ENCODE measurements at regions of chr15 and their contacts with region 1.

Region 1: GRCh38 chr15:51971375-51972133 is at the start of gene LEO1:
- DNase-seq: peak; percentile 95
- H3K4me3 Mint-ChIP-seq: peak within 1 kb of the TSS; percentile 97
- H3K27ac Mint-ChIP-seq: peak within 1 kb of the TSS; percentile 94
- H3K4me1 Mint-ChIP-seq: peaks cover 12% of the 10 kb centered on the region
- H3K27me3 Mint-ChIP-seq: no peaks in the 10 kb centered on the region
- CTCF ChIP-seq: peak; percentile 31
- total RNA-seq, gene LEO1: 24.2 and 29.3 TPM in 2 replicates

Region 2: GRCh38 chr15:51992976-51993375 is 21.4 kb after region 1 on chr15:
- CTCF ChIA-PET with region 1: no interaction called
- POLR2A ChIA-PET with region 1: interaction called, 36 read pairs
- intact Hi-C with region 1: no loop called
- DNase-seq: peak; percentile 71
- H3K4me3 Mint-ChIP-seq: no peak overlapping the region
- H3K27ac Mint-ChIP-seq: no peak overlapping the region
- H3K4me1 Mint-ChIP-seq: peaks cover 28% of the 10 kb centered on the region
- H3K27me3 Mint-ChIP-seq: no peaks in the 10 kb centered on the region
- CTCF ChIP-seq: no peak

Region 3: DNA sequence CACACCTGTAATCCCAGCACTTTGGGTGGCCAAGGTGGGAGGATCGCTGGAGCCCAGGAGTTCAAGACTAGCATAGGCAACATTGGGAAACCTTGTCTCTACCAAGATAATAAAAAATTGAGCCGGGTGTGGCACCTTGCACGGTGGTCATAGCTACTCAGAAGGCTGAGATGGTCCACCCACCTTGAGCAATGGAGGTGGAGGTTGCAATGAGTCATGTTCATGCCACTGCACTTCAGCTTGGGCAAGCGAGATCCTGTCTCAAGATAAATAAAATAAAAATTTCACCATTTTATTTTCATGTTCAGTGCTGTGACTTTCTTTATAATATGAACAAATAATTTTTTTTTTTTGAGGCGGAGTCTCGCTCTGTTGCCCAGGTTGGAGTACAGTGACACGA is 60.0 kb after region 1 on chr15:
- CTCF ChIA-PET with region 1: interaction called, 3 read pairs
- POLR2A ChIA-PET with region 1: interaction called, 17 read pairs
- intact Hi-C with region 1: no loop called
- DNase-seq: peak; percentile 95
- H3K4me3 Mint-ChIP-seq: no peak overlapping the region
- H3K27ac Mint-ChIP-seq: peak overlapping the region; percentile 31
- H3K4me1 Mint-ChIP-seq: peaks cover 16% of the 10 kb centered on the region
- H3K27me3 Mint-ChIP-seq: no peaks in the 10 kb centered on the region
- CTCF ChIP-seq: no peak

Region 4: DNA sequence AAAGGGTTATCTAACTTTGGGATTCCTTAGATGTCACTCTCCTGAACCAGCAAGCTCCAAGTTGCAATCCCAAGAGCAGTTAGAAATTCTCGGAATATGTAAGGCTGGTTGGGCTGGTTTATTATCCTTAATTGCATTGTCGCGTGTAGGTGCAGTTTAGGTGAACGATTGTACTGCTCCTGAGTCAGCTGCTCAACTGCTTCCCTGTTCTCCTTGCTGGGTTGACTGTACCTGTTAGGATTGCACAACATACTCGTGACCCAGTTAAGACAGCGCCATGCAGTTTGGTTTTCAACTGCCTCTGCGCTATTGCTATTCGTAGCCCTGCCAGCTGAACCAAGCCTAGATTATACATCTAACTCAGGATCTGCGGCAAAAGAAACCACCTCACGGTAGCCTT is 100.0 kb after region 1 on chr15:
- CTCF ChIA-PET with region 1: interaction called, 4 read pairs
- POLR2A ChIA-PET with region 1: interaction called, 62 read pairs
- intact Hi-C with region 1: no loop called
- DNase-seq: peak; percentile 87
- H3K4me3 Mint-ChIP-seq: peak overlapping the region; percentile 26
- H3K27ac Mint-ChIP-seq: peak overlapping the region; percentile 66
- H3K4me1 Mint-ChIP-seq: peaks cover 51% of the 10 kb centered on the region
- H3K27me3 Mint-ChIP-seq: no peaks in the 10 kb centered on the region
- CTCF ChIP-seq: no peak

Region 5: GRCh38 chr15:52179278-52180195 is 208.0 kb after region 1 on chr15:
- CTCF ChIA-PET with region 1: no interaction called
- POLR2A ChIA-PET with region 1: interaction called, 15 read pairs
- intact Hi-C with region 1: no loop called
- DNase-seq: peak; percentile 87
- H3K4me3 Mint-ChIP-seq: peak overlapping the region; percentile 81
- H3K27ac Mint-ChIP-seq: peak overlapping the region; percentile 93
- H3K4me1 Mint-ChIP-seq: peaks cover 10% of the 10 kb centered on the region
- H3K27me3 Mint-ChIP-seq: no peaks in the 10 kb centered on the region
- CTCF ChIP-seq: peak; percentile 21

Measured in MCF 10A (cell line).